SK-N-SH (cell line): ENCODE measurements at regions of chr17 and their contacts with region 1.

Region 1: DNA sequence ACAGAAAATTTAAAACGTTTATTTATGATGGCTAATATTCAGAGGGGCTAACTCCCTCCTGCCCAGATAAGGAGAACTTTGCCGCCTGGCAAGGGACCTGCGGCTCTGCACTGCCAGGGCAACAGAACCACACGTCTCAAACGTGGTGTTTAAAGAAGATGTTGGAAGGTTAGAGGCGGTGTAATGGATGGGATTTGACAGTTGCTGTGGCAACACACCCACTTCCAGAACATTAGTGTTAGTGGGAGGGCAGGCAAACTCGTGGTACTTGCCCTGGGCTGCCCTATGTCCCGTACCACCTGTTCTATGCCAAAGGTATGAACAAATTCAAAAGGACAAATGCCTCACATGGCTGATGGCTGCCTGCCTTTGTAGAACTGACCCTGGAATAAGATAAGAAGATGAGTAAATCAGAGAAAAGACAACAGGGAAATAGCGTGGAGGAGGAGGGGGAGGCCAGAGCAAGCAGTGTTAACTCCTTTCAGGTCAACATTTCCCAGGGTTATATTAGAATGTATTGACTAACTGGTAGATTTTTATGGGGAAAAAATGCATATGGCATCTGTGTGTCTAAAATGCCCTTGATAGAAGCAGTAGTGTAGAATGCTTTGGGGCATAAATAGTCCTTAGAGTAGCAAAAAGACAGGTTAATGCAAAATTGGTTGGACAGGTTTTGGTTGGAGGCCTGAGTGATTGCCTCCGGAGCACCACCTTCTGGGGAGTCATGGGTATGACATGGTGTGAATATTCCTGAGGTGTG is 30.8 kb downstream of the HLF start:
- DNase-seq: peak; percentile 76
- H3K4me3 ChIP-seq: no peak overlapping the region
- H3K27ac ChIP-seq: no peak overlapping the region
- H3K4me1 ChIP-seq: peaks cover 0 to 2% of the 10 kb centered on the region in 2 experiments; a peak in 1 of 4 replicates
- H3K27me3 ChIP-seq: no peaks in the 10 kb centered on the region; the same call in 1 of the 2 replicates
- CTCF ChIP-seq: peak; percentile 96
- EP300 ChIP-seq: no peak
- RAD21 ChIP-seq: peak; percentile 95

Region 2: GRCh38 chr17:55053855-55054254 is 241.7 kb before region 1 on chr17:
- CTCF ChIA-PET with region 1: interaction called, 17 read pairs
- POLR2A ChIA-PET with region 1: no interaction called
- DNase-seq: peak; percentile 3
- H3K4me3 ChIP-seq: no peak overlapping the region
- H3K27ac ChIP-seq: no peak overlapping the region
- H3K4me1 ChIP-seq: peaks cover 5% of the 10 kb centered on the region in 2 experiments; a peak in 3 of 4 replicates
- H3K27me3 ChIP-seq: no peaks in the 10 kb centered on the region
- CTCF ChIP-seq: peak; percentile 82
- EP300 ChIP-seq: no peak
- RAD21 ChIP-seq: peak; percentile 86

Region 3: DNA sequence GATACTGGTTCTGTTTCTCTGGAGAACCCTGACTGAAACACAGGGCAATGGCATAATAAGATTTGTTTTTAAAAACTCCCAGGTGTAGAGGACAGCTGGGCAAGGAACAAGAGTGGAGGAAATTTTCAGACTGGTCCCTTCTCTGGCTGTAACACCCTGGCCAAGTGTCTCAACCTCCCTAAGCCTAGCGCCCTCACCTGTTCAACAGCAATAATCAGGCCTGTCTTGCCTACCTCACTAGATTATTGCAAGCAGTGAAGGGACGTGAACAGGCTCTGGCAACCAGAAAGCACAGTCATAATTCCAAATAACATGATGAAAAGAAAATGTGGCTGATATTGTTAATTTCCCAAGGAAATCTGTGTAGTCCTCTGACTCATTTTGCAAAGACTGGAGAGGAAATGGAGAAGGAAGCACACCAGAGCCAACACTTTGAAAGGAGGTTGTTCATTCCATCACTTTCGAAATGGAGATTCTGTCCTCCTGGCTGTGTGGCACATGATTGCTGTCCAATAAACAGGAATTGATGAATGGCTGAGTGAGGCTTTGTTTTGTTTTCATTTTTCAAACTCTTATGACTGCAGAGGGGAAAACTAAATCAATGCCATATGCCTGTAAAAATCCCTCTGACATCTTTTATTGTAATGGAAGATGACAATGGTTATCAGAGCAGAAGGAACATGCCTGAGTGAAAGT is 118.3 kb before region 1 on chr17:
- CTCF ChIA-PET with region 1: no interaction called
- POLR2A ChIA-PET with region 1: no interaction called
- DNase-seq: no peak
- H3K4me3 ChIP-seq: no peak overlapping the region
- H3K27ac ChIP-seq: peak overlapping the region in 1 of 2 experiments; percentile 36; a peak in 1 of 4 replicates
- H3K4me1 ChIP-seq: peaks cover 0 to 17% of the 10 kb centered on the region in 2 experiments; a peak in 3 of 4 replicates
- H3K27me3 ChIP-seq: no peaks in the 10 kb centered on the region
- CTCF ChIP-seq: 0 out of 2 replicates have a peak, but pooled peaks have one; percentile 30
- EP300 ChIP-seq: no peak; a peak in 1 of 4 replicates
- RAD21 ChIP-seq: peak; percentile 32; the same call in 1 of the 2 replicates

Region 4: DNA sequence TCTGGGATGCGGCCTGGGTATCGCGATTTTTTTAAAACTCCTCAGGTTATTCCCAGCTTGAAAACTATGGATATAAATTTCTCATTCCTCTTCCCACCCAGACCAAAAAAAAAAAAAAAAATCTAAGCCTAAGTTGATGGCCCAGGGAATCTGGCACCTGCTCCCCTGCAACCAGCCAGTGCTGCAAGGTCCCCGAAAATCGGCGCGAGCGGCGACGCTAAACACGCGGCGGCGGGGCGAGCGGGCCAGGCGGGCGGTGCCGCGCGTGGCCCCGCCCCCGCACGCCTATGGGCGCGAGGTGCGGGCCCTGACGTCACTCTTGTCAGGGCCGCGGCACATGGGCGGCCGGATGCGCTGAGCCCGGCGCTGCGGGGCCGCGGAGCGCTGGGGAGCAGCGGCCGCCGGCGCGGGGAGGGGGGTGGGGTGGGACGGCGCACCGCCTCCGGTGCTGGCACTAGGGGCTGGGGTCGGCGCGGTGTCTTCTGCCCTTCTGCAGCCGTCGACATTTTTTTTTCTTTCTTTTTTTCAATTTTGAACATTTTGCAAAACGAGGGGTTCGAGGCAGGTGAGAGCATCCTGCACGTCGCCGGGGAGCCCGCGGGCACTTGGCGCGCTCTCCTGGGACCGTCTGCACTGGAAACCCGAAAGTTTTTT is 30.8 kb before region 1 on chr17 and contains the start of gene HLF:
- CTCF ChIA-PET with region 1: interaction called, 11 read pairs
- POLR2A ChIA-PET with region 1: no interaction called
- DNase-seq: peak; percentile 100
- H3K4me3 ChIP-seq: peak within 1 kb of the TSS; percentile 44 to 47
- H3K27ac ChIP-seq: no peak within 1 kb of the TSS
- H3K4me1 ChIP-seq: peaks cover 0 to 10% of the 10 kb centered on the region in 2 experiments; a peak in 2 of 4 replicates
- H3K27me3 ChIP-seq: peaks cover 20% of the 10 kb centered on the region
- CTCF ChIP-seq: no peak
- EP300 ChIP-seq: no peak
- RAD21 ChIP-seq: no peak; the same call in 1 of the 2 replicates
- polyA plus RNA-seq, gene HLF: 0.03 and 0.21 TPM in 2 replicates

Region 5: DNA sequence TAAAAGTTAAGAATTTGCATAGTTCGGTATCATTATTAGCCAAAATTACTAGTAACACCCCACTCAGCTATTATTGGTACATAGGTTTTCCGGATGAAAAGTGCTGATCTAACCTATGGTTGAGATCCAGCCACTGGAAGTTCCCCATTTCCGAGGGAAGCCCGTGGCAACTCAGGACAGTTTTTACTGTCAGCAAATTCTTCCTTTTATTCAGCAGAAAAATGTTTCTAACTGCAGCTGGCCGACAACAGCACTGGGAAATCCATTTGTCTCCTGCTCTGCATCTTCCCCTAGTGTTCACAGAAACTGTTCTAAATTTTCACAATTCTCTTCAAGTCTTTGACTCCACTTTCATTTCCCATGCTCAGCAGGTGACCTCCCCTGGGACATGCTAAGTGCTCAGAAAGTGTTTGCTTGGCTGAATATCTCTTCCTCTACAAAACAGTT is 141.6 kb after region 1 on chr17:
- CTCF ChIA-PET with region 1: no interaction called
- POLR2A ChIA-PET with region 1: no interaction called
- DNase-seq: no peak
- H3K4me3 ChIP-seq: no peak overlapping the region
- H3K27ac ChIP-seq: peak overlapping the region in 1 of 2 experiments; percentile 48; a peak in 2 of 4 replicates
- H3K4me1 ChIP-seq: peaks cover 0 to 39% of the 10 kb centered on the region in 2 experiments; a peak in 3 of 4 replicates
- H3K27me3 ChIP-seq: no peaks in the 10 kb centered on the region
- CTCF ChIP-seq: no peak
- EP300 ChIP-seq: no peak
- RAD21 ChIP-seq: no peak